Activated CD4-positive, alpha-beta T cell treated with anti-CD3 and anti-CD28 coated beads for 36 hours (primary cell): ENCODE measurements at regions of chr12 and their contacts with region 1.

Region 1: DNA sequence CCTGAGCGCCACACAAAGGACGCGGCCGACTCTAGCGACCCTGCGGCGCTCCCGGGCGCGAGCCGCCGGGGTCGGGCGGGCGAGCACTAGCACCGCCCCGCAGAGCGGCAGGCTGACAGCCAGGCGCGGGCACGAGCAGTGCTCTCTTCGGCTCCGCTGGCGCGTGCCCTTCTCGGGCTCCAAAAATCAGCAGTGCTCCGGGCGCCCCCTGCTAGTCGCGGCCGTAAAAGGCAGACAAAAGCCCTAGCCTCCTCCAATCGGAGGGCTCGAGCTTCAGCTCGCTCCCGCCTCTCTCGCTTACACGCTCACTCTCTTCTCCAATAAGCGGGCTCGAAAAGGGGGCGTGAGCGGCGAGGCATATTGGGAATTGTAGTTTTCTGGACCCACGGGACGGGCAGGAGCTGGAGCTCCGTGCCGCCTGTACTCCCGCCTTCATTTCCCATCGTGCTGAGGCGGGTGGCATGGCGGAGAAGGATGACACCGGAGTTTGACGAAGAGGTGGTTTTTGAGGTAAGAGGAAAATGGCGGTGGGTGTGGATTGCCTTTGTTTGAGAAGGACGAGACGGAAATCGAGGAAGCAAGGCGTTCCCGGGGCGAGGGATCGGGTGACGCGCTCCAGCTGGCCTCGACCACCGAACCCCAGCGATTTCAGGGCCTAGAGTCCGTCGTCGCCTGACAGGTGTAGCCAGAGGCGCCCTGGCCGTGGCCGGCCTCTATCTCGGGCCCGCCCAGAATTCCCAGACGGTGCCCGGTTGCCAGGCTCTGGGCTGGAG is at the starts of genes FGD6 and VEZT:
- DNase-seq: peak; percentile 98
- ATAC-seq: peak; percentile 95
- H3K4me3 Mint-ChIP-seq: peak within 1 kb of the TSS; percentile 86
- H3K27ac Mint-ChIP-seq: peak within 1 kb of the TSS; percentile 93
- H3K4me1 Mint-ChIP-seq: peaks cover 31% of the 10 kb centered on the region
- H3K27me3 Mint-ChIP-seq: peaks cover 3% of the 10 kb centered on the region
- total RNA-seq, gene FGD6: 1.1 to 1.3 TPM
- total RNA-seq, gene VEZT: 55.8 to 72.7 TPM

Region 2: DNA sequence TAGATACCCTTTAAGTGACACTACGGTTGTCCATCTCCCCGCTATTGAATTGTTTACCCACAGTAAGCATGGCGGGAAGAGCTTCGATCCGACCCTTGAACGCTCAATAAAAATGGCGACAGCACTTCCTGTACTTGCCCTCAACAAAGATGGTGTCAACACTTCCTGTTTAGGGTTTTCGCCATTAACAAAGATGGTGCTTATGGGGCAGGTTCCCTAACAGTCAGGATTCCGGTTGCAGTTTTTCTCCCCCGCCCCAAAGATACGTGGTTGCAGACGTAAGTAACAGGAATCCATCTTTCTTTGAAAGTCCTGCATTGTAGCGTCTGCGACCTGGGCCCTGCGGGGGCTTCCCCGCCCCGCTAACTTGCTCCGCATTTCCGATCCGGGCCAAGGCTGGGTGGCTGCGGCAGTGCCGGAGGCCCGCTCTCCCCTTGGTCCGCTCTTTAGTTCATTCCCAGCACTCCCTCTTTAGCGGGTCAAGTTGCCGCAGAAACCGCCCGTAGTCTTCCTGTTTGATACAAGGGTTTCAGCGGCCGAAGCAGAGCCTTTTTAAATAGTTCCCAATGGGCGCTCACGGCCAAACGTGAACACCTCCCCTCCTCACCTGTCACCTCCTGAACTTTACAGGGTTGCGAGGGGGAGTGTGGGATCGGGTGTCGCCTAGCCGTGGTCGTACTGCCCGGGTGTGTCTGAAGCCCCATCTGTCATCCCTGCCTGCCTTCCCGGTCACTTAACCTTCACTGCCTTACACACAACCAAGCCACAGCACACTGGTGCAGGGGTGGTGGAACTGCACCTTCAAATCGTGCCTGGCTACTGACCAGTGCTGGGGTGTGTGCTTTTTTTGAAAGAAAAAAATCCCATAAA is 1540.1 kb before region 1 on chr12 and contains the start of gene CRADD:
- CTCF ChIA-PET with region 1: no interaction called
- POLR2A ChIA-PET with region 1: no interaction called
- intact Hi-C with region 1: loop called in 1 of 2 experiments (anchors 5 kb)
- DNase-seq: peak; percentile 90
- ATAC-seq: peak; percentile 97
- H3K4me3 Mint-ChIP-seq: peak within 1 kb of the TSS; percentile 97
- H3K27ac Mint-ChIP-seq: peak within 1 kb of the TSS; percentile 100
- H3K4me1 Mint-ChIP-seq: peaks cover 29% of the 10 kb centered on the region
- H3K27me3 Mint-ChIP-seq: peaks cover 8% of the 10 kb centered on the region
- total RNA-seq, gene CRADD: 5.7 to 7.8 TPM

Region 3: DNA sequence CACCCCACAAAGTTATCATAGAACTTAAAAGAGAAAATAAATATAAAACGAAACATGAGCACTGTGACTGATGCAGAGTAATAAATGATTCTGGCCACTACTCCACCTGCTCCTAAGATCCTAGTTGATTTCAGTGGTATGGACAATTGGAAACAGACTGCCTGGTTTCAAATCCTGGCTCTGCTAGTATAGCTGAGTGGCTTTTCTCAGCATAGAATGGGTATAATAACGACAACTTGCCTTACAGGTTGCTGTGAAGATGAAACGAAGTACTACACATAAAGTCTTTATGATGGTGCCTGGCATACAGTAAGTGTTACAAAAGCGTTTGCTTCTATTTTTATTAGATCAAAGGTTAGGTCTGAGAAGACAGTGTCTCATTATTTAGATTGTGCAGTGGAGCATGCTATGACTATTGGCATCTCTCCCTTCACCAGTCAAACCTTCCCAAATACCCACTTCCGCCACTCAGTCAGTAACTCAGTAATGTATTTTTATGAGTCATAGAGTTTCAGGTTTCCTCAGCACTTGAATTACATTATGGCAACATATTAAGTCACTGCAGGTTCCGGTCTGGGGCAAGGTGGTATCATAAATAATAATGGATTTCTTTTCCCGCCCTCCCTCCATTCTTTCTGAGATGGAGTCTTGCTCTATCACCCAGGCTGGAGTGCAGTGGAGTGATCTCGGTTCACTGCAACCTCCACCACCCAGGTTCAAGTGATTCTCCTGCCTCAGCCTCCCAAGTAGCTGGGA is 114.5 kb before region 1 on chr12:
- CTCF ChIA-PET with region 1: no interaction called
- POLR2A ChIA-PET with region 1: no interaction called
- intact Hi-C with region 1: loop called (anchors 5 kb)
- DNase-seq: peak; percentile 68
- ATAC-seq: peak; percentile 99
- H3K4me3 Mint-ChIP-seq: no peak overlapping the region
- H3K27ac Mint-ChIP-seq: peak overlapping the region; percentile 38
- H3K4me1 Mint-ChIP-seq: peaks cover 14% of the 10 kb centered on the region
- H3K27me3 Mint-ChIP-seq: no peaks in the 10 kb centered on the region

Region 4: DNA sequence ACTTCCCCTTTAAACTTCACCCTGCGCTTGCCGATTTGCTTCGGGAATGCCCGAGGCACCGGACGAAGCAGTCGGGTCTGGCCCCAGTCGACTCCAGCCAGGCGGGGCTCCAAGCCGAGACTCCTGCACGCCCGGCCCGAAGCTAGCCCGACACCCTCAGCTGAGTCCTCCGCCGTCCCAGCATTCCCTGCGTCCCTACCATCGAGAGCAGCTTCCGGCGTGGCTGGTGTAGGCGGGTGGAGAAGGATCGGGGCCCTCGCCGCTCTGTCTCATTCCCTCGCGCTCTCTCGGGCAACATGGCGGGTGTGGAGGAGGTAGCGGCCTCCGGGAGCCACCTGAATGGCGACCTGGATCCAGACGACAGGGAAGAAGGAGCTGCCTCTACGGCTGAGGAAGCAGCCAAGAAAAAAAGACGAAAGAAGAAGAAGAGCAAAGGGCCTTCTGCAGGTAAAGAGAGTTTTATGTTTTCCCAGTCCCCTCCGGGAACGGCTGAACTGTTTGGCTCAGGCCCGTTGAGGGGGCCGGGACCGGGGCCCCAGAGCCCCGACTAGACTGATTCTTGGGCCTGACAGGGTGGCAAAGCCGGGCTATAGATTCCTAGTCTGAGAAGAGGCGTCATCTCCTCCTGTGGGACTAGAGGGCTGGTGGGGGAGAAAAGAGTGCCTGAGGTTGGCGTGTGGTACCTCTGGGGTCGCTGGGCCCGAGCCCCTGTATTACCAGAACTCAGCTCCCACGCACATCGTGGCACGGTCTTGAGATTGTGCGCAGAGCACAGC is 256.5 kb after region 1 on chr12 and contains the start of gene METAP2:
- CTCF ChIA-PET with region 1: no interaction called
- POLR2A ChIA-PET with region 1: interaction called, 8 read pairs
- intact Hi-C with region 1: loop called (anchors 1 to 2 kb)
- DNase-seq: peak; percentile 97
- ATAC-seq: peak; percentile 98
- H3K4me3 Mint-ChIP-seq: peak within 1 kb of the TSS; percentile 96
- H3K27ac Mint-ChIP-seq: peak within 1 kb of the TSS; percentile 100
- H3K4me1 Mint-ChIP-seq: peaks cover 50% of the 10 kb centered on the region
- H3K27me3 Mint-ChIP-seq: no peaks in the 10 kb centered on the region
- total RNA-seq, gene METAP2: 136 to 152 TPM

Region 5: DNA sequence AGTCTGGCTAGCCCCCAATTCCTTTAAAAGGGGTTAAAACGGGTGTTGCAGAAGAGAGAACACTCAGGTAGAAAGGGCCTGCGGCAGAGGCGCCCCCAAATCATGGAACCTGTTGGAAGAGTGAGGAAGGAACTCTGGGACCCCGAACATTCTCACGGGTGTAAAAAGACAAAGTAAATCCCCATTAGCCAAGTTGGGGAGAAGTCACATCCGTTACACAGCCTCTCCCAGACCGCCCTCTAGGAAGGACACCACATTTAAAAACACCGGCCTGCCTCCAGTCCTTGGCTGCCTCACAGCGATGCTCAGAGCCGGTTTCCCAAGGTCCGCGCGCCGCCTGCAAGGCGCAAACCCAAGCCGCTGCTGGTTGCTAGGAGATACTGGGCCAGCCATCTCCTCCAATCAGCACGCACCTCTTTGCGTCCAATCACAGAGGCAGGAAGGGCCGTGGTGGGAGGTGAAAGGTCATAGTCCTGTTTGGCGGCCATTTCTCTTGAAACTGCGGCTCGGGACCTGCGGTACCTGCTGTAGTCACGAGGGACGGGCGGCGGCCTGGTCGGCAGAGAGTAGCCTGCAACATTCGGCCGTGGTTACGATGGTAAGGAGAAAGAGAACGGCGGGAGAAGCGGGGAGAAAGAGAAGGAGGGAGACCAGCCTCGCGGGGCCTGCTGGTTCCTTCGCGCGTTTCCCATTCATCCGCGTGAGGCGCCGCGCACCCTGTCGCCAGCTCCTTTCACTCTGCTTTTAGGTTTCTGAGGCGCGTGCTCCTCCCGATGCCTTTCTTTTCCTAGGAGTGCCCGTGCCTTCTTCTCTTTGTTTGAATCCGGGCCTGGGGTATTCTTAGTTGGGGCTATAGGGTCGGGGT is 641.1 kb after region 1 on chr12 and contains the start of gene SNRPF:
- CTCF ChIA-PET with region 1: no interaction called
- POLR2A ChIA-PET with region 1: no interaction called
- intact Hi-C with region 1: loop called (anchors 1 kb)
- DNase-seq: peak; percentile 95
- ATAC-seq: peak; percentile 95
- H3K4me3 Mint-ChIP-seq: no peak within 1 kb of the TSS
- H3K27ac Mint-ChIP-seq: peak within 1 kb of the TSS; percentile 59
- H3K4me1 Mint-ChIP-seq: peaks cover 28% of the 10 kb centered on the region
- H3K27me3 Mint-ChIP-seq: peaks cover 3% of the 10 kb centered on the region
- total RNA-seq, gene SNRPF: 23.1 to 61.1 TPM